ENCODE measurements at regions of chr11 and their contacts with region 1.

Region 1: DNA sequence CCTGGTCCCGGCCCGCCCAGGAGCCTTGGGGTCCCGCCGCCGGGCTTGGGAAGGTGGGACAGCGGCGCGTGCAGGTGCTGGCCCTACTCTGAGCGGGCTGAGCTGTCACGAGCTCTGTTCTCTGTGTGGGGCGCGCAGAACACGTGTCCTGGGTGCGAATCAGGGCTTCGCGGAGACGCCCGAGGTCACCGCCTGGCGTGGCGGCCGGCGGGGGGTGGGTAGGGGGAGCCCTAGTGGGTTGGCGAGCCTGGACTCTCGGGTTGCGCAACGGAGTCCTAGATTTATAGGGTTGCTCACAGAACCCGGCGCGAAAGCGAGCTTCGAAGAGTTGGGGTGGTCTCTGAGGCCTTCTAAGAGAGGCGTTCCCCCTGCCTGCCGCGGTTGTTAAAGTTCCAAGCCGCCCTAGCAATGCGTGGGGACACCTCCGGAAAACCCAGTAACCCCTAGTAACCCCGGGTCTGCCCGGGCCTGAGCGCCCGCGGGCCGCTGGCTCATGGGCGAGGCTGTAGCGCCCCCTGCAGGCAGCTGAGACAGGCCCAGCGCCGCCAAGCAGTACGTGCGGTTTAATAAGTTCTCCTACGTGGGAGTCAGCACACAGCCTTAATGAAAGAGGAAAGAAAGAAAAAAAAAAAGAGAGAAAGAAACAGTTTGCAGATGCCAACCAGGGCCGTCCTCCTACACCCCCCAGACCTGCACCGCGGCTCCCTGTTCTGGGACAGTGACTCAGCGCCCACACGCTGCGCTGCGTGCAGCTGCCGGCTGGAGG is 2.8 kb downstream of the ADM start:
- DNase-seq: peak; percentile 91 to 93
- ATAC-seq: peak; percentile 45 to 61
- H3K4me3 ChIP-seq: peak overlapping the region; percentile 75
- H3K27ac ChIP-seq: peak overlapping the region; percentile 94
- H3K4me1 ChIP-seq: peaks cover 29% of the 10 kb centered on the region
- CTCF ChIP-seq: peak; percentile 99
- EP300 ChIP-seq: peak in 1 of 2 experiments; percentile 41; a peak in 2 of 5 replicates
- POLR2A ChIP-seq: peak; percentile 54
- RAD21 ChIP-seq: peak; percentile 88 to 98

Region 2: GRCh38 chr11:9748361-9748970 is 559.2 kb before region 1 on chr11:
- CTCF ChIA-PET with region 1: interaction called, 34 read pairs
- POLR2A ChIA-PET with region 1: interaction called, 3 read pairs
- DNase-seq: peak; percentile 85 to 89
- ATAC-seq: peak; percentile 96 to 97
- H3K4me3 ChIP-seq: no peak overlapping the region
- H3K27ac ChIP-seq: peak overlapping the region in 1 of 2 experiments; percentile 50; a peak in 2 of 6 replicates
- H3K4me1 ChIP-seq: peaks cover 21% of the 10 kb centered on the region
- CTCF ChIP-seq: peak; percentile 88
- EP300 ChIP-seq: no peak
- POLR2A ChIP-seq: no peak
- RAD21 ChIP-seq: peak; percentile 93 to 98

Region 3: GRCh38 chr11:9972989-9973388 is 334.6 kb before region 1 on chr11:
- CTCF ChIA-PET with region 1: interaction called, 12 read pairs
- POLR2A ChIA-PET with region 1: no interaction called
- DNase-seq: peak; percentile 63
- ATAC-seq: peak; percentile 56 to 73; a peak in 4 of 6 replicates
- H3K4me3 ChIP-seq: no peak overlapping the region
- H3K27ac ChIP-seq: peak overlapping the region; percentile 12 to 56; a peak in 3 of 6 replicates
- H3K4me1 ChIP-seq: peaks cover 39% of the 10 kb centered on the region
- CTCF ChIP-seq: peak; percentile 89
- EP300 ChIP-seq: no peak
- POLR2A ChIP-seq: no peak
- RAD21 ChIP-seq: peak; percentile 89 to 91

Region 4: GRCh38 chr11:10197091-10197490 is 110.5 kb before region 1 on chr11:
- CTCF ChIA-PET with region 1: interaction called, 12 read pairs
- POLR2A ChIA-PET with region 1: no interaction called
- DNase-seq: no peak
- ATAC-seq: no peak
- H3K4me3 ChIP-seq: no peak overlapping the region
- H3K27ac ChIP-seq: no peak overlapping the region
- H3K4me1 ChIP-seq: no peaks in the 10 kb centered on the region
- CTCF ChIP-seq: no peak
- EP300 ChIP-seq: no peak
- POLR2A ChIP-seq: no peak
- RAD21 ChIP-seq: no peak

Region 5: DNA sequence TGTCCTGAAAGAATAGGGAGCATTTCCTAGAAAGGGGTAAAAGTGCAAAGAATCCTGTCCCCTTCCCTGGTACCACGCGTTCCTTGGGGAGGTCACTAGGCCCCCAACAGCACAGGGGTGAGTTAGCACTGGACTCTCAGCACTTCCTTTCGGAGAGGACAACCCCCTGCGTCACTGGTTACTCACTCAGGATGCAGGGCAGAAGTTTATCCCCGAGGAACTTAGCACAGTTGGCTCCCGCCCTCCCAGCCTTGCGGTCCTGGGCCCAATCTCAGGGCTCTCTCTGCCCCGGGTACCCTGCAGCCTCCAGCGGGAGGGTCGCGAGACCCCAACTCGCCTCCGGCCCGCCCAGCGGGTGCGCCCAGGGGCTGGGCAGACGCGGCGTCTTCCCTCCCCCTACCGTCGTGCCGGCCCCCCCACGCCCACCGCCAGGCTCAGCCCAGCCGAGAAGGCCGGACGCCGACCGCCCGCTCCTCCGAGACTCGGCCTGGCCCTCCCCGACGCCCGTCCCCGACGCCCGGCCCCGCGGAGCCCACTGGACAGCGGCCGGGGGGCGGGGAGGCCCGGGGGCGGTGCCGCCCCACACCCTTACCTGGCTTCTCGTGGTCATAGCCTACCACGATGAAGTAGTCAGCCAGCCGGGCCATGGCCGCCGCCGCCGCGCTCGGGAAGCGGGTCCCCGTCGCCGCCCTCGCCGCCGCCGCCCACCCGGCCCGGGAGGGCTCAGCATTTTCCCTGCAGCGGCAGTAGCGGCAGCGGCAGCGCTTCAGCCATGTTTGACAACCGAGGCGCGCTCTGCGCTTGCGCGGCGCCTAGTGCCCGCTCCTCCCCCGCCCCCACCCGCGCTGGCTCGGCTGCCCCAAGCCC is 14.0 kb before region 1 on chr11 and contains the start of gene SBF2:
- CTCF ChIA-PET with region 1: interaction called, 33 read pairs
- POLR2A ChIA-PET with region 1: interaction called, 15 read pairs
- DNase-seq: peak; percentile 89 to 90
- ATAC-seq: peak; percentile 91
- H3K4me3 ChIP-seq: peak within 1 kb of the TSS; percentile 75
- H3K27ac ChIP-seq: peak within 1 kb of the TSS; percentile 95 to 96
- H3K4me1 ChIP-seq: peaks cover 27% of the 10 kb centered on the region
- CTCF ChIP-seq: no peak
- EP300 ChIP-seq: no peak
- POLR2A ChIP-seq: peak; percentile 63
- RAD21 ChIP-seq: peak in 1 of 2 experiments; percentile 4; a peak in 1 of 5 replicates
- polyA plus RNA-seq, gene SBF2: 49.6 and 59.0 TPM in 2 replicates

Region 6: DNA sequence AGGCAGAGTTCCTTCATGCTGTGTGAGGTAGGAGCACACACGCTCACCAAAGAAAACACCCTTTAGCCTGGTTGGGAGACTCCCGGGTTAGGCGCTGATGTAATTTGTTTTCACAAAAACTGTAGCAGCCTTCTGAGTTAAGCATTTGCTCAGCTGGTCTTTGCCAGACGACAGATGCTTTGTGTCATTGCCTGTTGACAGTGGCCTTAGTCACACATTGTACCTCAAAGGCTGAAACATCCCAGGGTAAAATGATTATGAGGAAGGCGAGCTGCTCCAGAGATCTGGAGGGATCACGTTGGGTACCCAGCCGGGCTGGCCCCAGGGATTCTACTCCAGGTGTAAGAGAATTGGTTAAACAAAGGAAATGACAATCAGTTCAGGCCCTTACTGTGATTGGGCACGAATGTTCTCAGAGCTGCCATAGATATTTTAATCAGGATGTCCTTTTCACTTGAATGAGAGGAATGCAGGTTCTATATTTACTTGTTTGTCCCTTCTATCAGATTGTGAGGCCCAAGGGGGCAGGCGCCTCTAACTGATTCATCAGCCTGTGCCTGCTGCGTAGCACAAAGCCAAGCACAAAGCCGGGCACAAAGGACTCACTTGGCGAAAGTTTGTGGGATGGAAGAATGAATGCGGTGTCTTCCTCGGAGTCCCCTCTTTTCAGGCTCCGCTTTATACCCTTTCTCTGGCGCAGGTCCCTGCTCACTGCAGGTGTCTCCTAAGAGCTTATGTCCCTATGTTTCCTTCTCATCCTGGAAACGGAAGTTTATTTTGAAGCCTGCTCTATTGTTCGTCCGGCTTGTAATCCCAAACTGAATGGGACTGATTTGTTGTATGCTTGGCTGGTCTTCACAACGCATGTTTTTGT is 44.4 kb after region 1 on chr11:
- CTCF ChIA-PET with region 1: no interaction called
- POLR2A ChIA-PET with region 1: no interaction called
- DNase-seq: peak; percentile 21 to 59
- ATAC-seq: peak; percentile 66 to 73
- H3K4me3 ChIP-seq: no peak overlapping the region
- H3K27ac ChIP-seq: peak overlapping the region; percentile 50 to 68
- H3K4me1 ChIP-seq: peaks cover 33% of the 10 kb centered on the region
- CTCF ChIP-seq: no peak
- EP300 ChIP-seq: no peak
- POLR2A ChIP-seq: no peak
- RAD21 ChIP-seq: no peak

Region 7: DNA sequence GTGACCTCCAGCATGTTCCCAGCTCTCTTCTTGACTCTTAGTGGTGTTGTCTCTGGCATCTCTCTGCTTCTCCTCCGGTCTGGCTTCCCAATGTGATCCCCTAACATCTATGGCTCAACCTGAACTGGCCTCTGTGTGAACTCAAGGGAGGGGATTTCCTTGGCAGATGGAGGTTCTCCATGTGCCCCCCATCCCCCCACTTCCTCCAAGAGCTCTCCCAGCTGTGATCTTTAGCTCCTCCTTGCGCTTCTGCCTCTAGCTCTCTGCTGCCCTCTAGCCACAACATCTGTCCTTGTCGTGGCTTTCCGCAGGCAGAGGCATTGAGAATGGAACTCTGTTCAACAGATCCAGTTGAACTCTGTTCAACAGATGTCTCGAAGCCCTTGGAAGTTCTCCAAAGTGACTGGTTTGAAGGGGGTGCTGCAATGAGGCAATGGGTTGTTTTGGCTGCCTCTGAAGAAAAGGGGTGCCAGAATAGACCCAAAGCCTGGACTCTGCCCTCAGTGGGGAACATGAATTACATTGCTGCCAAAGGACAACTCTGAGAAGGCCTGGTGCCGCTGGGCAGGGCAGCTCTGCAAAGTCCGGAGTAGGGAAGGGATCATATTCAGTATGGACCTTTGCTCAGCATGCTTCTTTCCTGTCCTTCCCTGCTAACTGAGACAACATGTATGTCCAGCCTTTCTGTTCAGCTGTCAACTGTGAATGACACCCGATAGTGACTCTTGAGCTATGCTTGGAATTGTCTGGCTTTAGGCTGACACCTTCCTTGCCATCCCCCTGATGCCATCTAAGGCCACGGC is 59.1 kb after region 1 on chr11:
- CTCF ChIA-PET with region 1: interaction called, 40 read pairs
- POLR2A ChIA-PET with region 1: interaction called, 30 read pairs
- DNase-seq: peak; percentile 78 to 96
- ATAC-seq: peak; percentile 97 to 98
- H3K4me3 ChIP-seq: no peak overlapping the region
- H3K27ac ChIP-seq: peak overlapping the region; percentile 78 to 84
- H3K4me1 ChIP-seq: peaks cover 15% of the 10 kb centered on the region
- CTCF ChIP-seq: peak; percentile 86
- EP300 ChIP-seq: peak in 1 of 2 experiments; percentile 42; a peak in 1 of 5 replicates
- POLR2A ChIP-seq: no peak
- RAD21 ChIP-seq: peak; percentile 91 to 96

Region 8: DNA sequence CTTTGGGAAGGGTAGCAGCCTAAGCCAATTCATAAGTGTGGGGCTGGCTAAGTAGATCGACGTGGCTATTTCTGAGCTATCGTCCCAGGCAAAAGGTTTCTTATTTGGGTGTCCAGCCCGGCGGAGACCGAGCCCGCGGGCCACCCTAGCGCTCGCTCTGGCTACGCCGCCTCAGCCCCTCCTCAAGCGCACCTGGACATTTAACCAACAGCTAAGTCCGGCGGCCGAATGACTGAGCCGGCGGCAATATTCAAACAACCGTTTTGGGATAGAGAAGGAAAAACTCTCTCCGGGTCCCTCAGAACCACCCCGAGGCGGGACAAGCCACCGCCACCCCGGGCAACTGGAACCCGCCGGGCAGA is 232.9 kb after region 1 on chr11:
- CTCF ChIA-PET with region 1: no interaction called
- POLR2A ChIA-PET with region 1: no interaction called
- DNase-seq: no peak
- ATAC-seq: peak; percentile 68 to 74
- H3K4me3 ChIP-seq: peak overlapping the region; percentile 75
- H3K27ac ChIP-seq: peak overlapping the region; percentile 85 to 87
- H3K4me1 ChIP-seq: peaks cover 15% of the 10 kb centered on the region
- CTCF ChIP-seq: no peak
- EP300 ChIP-seq: no peak
- POLR2A ChIP-seq: no peak
- RAD21 ChIP-seq: no peak

Measured in A549 (cell line).